T-cell (primary cell): ENCODE measurements at regions of chr4 and their contacts with region 1.

Region 1: GRCh38 chr4:81069706-81070331 is 39.3 kb downstream of the BMP3 start:
- DNase-seq: peak in 34 of 35 experiments; percentile 0 to 80 (median 36)
- ATAC-seq: peak; percentile 59 to 84 (median 70)
- H3K4me3 ChIP-seq: no peak overlapping the region
- H3K4me3 Mint-ChIP-seq: no peak overlapping the region
- H3K27ac ChIP-seq: no peak overlapping the region
- H3K27ac Mint-ChIP-seq: no peak overlapping the region
- H3K4me1 ChIP-seq: no peaks in the 10 kb centered on the region
- H3K4me1 Mint-ChIP-seq: no peaks in the 10 kb centered on the region
- H3K27me3 ChIP-seq: no peaks in the 10 kb centered on the region
- H3K27me3 Mint-ChIP-seq: peaks cover 14 to 19% of the 10 kb centered on the region in 2 donors

Region 2: GRCh38 chr4:81351654-81352445 is 282.0 kb after region 1 on chr4:
- CTCF ChIA-PET with region 1: interaction called, 3 to 18 read pairs
- POLR2A ChIA-PET with region 1: no interaction called
- DNase-seq: peak in 34 of 35 experiments; percentile 4 to 76 (median 50)
- ATAC-seq: peak; percentile 59 to 68 (median 67)
- H3K4me3 ChIP-seq: no peak overlapping the region
- H3K4me3 Mint-ChIP-seq: no peak overlapping the region
- H3K27ac ChIP-seq: no peak overlapping the region
- H3K27ac Mint-ChIP-seq: no peak overlapping the region
- H3K4me1 ChIP-seq: no peaks in the 10 kb centered on the region
- H3K4me1 Mint-ChIP-seq: no peaks in the 10 kb centered on the region
- H3K27me3 ChIP-seq: no peaks in the 10 kb centered on the region
- H3K27me3 Mint-ChIP-seq: peaks cover 19 to 20% of the 10 kb centered on the region in 2 donors